ENCODE measurements at regions of chr14 and their contacts with region 1.

Region 1: DNA sequence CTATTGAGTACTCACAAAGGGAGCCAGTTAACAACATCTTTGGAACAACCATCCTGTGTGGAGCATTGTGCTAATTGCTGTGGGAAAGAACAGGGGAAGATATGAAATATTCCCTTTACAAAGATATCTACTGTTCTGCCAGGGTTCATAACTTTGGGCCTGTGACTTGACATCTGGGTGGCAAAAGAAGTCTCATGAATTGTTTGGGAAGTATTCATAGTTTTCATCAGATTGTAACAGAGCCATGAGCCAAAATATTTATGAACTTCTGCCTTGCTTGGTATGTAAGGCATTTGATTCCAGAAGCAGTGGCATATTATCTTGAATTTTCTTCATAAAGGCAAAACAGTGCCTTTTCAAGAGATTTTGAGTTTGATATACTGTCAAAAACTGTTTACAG is 816.2 kb downstream of the DIO2 start:
- DNase-seq: no peak
- ATAC-seq: peak; percentile 34

Region 2: GRCh38 chr14:78997811-78998210 is 397.2 kb before region 1 on chr14:
- intact Hi-C with region 1: loop called (anchors 10 kb)
- DNase-seq: no peak
- ATAC-seq: no peak

Region 3: DNA sequence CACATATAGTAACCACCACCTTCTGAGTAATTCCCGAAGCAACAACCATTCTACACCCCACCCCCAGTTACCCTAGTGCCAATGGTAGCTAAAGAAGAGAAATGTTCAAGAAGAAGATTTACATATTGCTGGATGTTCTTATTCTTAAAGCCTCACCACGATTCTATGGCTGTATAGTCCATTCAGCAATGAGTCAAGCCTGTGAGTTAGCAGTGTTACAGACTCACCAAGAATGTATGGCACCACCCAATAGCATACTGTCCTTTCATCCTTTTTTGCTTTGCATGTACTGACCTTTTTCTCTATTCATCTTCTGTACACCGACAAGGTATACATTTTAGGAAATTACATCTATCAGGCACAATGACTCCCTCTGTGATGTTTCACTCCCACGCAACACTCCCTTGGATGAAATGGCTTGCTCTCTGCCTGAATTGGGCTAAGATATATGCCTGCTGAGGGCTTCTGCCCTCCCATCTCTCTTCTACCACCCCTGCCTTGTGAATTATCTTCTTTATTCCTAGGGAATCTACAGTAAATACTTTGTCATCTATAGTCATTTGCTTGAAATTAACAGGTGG is 129.6 kb before region 1 on chr14:
- intact Hi-C with region 1: no loop called
- DNase-seq: no peak
- ATAC-seq: no peak